ENCODE measurements at regions of chr7 and their contacts with region 1.

Region 1: GRCh38 chr7:30026229-30027064 is at the start of gene FKBP14:
- DNase-seq: peak; percentile 94 to 99
- H3K4me3 ChIP-seq: peak within 1 kb of the TSS; percentile 96 to 97
- H3K27ac ChIP-seq: peak within 1 kb of the TSS; percentile 91 to 96
- H3K4me1 ChIP-seq: peaks cover 0 to 21% of the 10 kb centered on the region in 2 donors
- H3K27me3 ChIP-seq: no peaks in the 10 kb centered on the region
- CTCF ChIP-seq: no peak
- total RNA-seq, gene FKBP14: 7.3 TPM

Region 2: GRCh38 chr7:29811586-29811985 is 214.9 kb before region 1 on chr7:
- intact Hi-C with region 1: loop called (anchors 5 kb)
- DNase-seq: no peak
- H3K4me3 ChIP-seq: no peak overlapping the region
- H3K27ac ChIP-seq: no peak overlapping the region
- H3K4me1 ChIP-seq: no peaks in the 10 kb centered on the region
- H3K27me3 ChIP-seq: no peaks in the 10 kb centered on the region
- CTCF ChIP-seq: no peak

Region 3: DNA sequence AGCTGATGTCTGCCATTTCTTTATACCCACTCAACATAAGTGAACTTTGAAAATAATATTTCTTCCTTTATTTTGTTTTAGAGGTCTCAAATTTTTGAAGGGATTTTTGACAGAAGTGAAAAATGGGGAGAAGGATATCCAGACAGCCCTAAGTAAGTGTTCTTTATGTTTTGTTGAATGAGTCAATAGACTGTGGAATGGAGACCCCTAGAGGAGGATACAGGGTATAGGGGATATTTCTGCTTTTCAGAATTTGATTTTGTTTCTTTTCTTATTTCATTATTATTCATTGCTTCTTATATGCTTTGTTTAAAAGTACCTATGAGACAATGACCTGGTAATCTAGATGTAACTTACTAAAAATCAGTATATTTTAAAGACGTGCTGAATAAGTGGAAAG is 36.1 kb after region 1 on chr7:
- intact Hi-C with region 1: loop called (anchors 2 kb)
- DNase-seq: no peak
- H3K4me3 ChIP-seq: no peak overlapping the region
- H3K27ac ChIP-seq: no peak overlapping the region
- H3K4me1 ChIP-seq: no peaks in the 10 kb centered on the region
- H3K27me3 ChIP-seq: no peaks in the 10 kb centered on the region
- CTCF ChIP-seq: peak; percentile 22 to 52 (median 39)

Region 4: GRCh38 chr7:30134611-30135545 is 108.4 kb after region 1 on chr7 and contains the start of gene MTURN:
- intact Hi-C with region 1: loop called (anchors 2 kb)
- DNase-seq: peak; percentile 56 to 94
- H3K4me3 ChIP-seq: peak within 1 kb of the TSS; percentile 84 to 85
- H3K27ac ChIP-seq: peak within 1 kb of the TSS; percentile 89 to 96
- H3K4me1 ChIP-seq: peaks cover 9 to 13% of the 10 kb centered on the region in 2 donors
- H3K27me3 ChIP-seq: no peaks in the 10 kb centered on the region
- CTCF ChIP-seq: peak in 1 of 3 experiments; percentile 10
- total RNA-seq, gene MTURN: 40.9 TPM

Region 5: GRCh38 chr7:30184791-30185487 is 158.5 kb after region 1 on chr7:
- intact Hi-C with region 1: loop called (anchors 1 kb)
- DNase-seq: peak; percentile 54 to 85
- H3K4me3 ChIP-seq: no peak overlapping the region
- H3K27ac ChIP-seq: peak overlapping the region; percentile 54 to 79
- H3K4me1 ChIP-seq: peaks cover 2 to 36% of the 10 kb centered on the region in 2 donors
- H3K27me3 ChIP-seq: no peaks in the 10 kb centered on the region
- CTCF ChIP-seq: no peak

Region 6: GRCh38 chr7:30504347-30505173 is 478.1 kb after region 1 on chr7 and contains the start of gene GGCT:
- intact Hi-C with region 1: loop called (anchors 5 kb)
- DNase-seq: peak; percentile 99 to 100
- H3K4me3 ChIP-seq: peak within 1 kb of the TSS; percentile 88 to 95
- H3K27ac ChIP-seq: peak within 1 kb of the TSS; percentile 88 to 93
- H3K4me1 ChIP-seq: peaks cover 2 to 6% of the 10 kb centered on the region in 2 donors
- H3K27me3 ChIP-seq: no peaks in the 10 kb centered on the region
- CTCF ChIP-seq: no peak
- total RNA-seq, gene GGCT: 0.43 TPM

Measured in ascending aorta (tissue), 2 donors.